A549 (cell line): ENCODE measurements at regions of chr17 and their contacts with region 1.

Region 1: GRCh38 chr17:19362277-19363113 is at the start of gene B9D1:
- DNase-seq: peak; percentile 97 to 99
- ATAC-seq: peak; percentile 79 to 93
- H3K4me3 ChIP-seq: peak within 1 kb of the TSS; percentile 82
- H3K27ac ChIP-seq: peak within 1 kb of the TSS; percentile 94 to 96
- H3K4me1 ChIP-seq: peaks cover 16% of the 10 kb centered on the region; the same call in 2 of the 3 replicates
- CTCF ChIP-seq: peak; percentile 100
- EP300 ChIP-seq: no peak
- POLR2A ChIP-seq: peak; percentile 47
- RAD21 ChIP-seq: peak; percentile 100
- polyA plus RNA-seq, gene B9D1: 60.6 and 65.6 TPM in 2 replicates

Region 2: DNA sequence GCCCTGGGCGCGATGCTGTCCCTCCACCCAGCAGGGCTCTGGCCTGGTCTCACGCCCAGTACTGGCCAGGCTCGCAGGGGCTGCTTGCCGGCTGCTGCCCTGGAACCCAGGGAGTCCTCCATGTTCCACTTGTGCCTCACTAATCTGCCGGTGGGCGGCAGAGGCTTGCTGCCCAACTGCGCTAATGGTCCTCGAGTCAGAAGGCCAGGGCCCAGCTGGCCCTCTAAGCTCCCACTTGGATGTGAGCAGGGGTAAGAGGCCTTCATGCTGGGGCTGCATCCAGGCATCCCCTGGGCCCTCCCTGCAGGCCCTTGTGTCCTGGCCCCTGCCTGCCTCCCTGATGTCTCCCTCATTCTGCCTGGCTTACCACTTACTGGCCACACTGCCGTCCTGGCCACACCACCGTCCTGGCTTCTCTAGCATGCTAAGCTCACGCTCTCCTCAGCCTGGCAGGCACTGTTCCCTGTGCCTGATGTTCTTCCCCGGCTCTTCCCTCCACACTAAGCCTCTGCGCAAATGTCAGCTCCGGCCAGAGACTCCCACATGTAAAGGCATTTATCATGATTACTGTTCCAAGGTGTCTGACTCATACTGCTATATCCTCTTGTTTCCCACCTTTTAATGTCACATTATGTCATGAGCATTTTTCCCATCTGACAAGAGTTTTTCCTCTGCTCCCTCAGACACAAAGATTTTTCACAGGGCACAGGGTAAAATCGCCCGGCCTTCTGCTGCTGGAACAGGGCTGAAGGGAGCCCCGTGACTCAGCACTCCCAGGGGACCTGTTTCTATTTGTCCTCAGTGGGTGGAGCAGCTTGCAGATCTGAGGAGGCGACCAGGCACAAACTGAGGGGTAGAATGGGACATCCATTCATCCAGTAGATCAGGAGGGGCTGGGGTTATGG is 15.9 kb before region 1 on chr17:
- CTCF ChIA-PET with region 1: interaction called, 28 read pairs
- POLR2A ChIA-PET with region 1: interaction called, 3 read pairs
- DNase-seq: peak; percentile 84 to 94
- ATAC-seq: peak; percentile 73 to 84
- H3K4me3 ChIP-seq: no peak overlapping the region
- H3K27ac ChIP-seq: peak overlapping the region; percentile 86 to 93
- H3K4me1 ChIP-seq: peaks cover 35% of the 10 kb centered on the region
- CTCF ChIP-seq: no peak
- EP300 ChIP-seq: no peak
- POLR2A ChIP-seq: peak; percentile 3; the same call in 1 of the 2 replicates
- RAD21 ChIP-seq: 0 out of 5 replicates have a peak, but pooled peaks of 1 of the 2 experiments have one; percentile 5

Region 3: GRCh38 chr17:19410875-19411620 is 48.6 kb after region 1 on chr17 and contains the start of gene RNF112:
- CTCF ChIA-PET with region 1: interaction called, 35 read pairs
- POLR2A ChIA-PET with region 1: interaction called, 3 read pairs
- DNase-seq: no peak
- ATAC-seq: peak in 1 of 2 experiments; percentile 23; a peak in 1 of 6 replicates
- H3K4me3 ChIP-seq: no peak within 1 kb of the TSS
- H3K27ac ChIP-seq: peak within 1 kb of the TSS in 1 of 2 experiments; percentile 34; a peak in 1 of 6 replicates
- H3K4me1 ChIP-seq: no peaks in the 10 kb centered on the region
- CTCF ChIP-seq: no peak
- EP300 ChIP-seq: no peak
- POLR2A ChIP-seq: no peak
- RAD21 ChIP-seq: no peak
- polyA plus RNA-seq, gene RNF112: 0.27 and 0.65 TPM in 2 replicates

Region 4: DNA sequence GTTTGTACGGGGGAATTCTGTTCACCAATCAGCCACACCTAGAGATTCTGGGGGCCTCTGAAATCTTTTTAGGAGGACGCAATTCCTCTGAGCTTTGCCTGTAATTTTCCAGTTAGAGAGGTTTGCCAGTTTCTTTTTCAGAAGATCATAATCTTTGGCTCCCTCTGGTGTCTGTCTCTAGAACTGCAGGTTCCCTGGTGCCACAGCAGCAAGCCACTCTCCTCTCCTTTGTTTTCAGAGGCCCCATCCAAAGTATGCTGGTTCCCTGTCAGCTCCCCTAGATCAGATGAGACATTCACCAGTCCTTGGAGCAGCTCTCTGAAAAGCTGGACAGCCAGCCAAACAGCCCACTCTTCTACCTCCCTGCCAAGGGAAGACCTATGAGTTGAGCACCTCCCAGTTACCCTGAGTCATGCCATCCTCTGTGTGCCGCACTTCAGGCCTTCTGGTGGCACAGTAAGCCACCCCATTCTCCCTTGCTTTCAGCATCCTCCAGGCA is 84.6 kb after region 1 on chr17:
- CTCF ChIA-PET with region 1: interaction called, 362 read pairs
- POLR2A ChIA-PET with region 1: interaction called, 11 read pairs
- DNase-seq: peak; percentile 75 to 80
- ATAC-seq: peak; percentile 74 to 82
- H3K4me3 ChIP-seq: no peak overlapping the region
- H3K27ac ChIP-seq: peak overlapping the region; percentile 56 to 82
- H3K4me1 ChIP-seq: peaks cover 29% of the 10 kb centered on the region
- CTCF ChIP-seq: peak; percentile 97
- EP300 ChIP-seq: no peak
- POLR2A ChIP-seq: no peak
- RAD21 ChIP-seq: peak; percentile 95 to 96

Region 5: GRCh38 chr17:19513897-19514488 is 151.5 kb after region 1 on chr17:
- CTCF ChIA-PET with region 1: interaction called, 24 read pairs
- POLR2A ChIA-PET with region 1: no interaction called
- DNase-seq: peak; percentile 72 to 82
- ATAC-seq: peak; percentile 91 to 92
- H3K4me3 ChIP-seq: no peak overlapping the region
- H3K27ac ChIP-seq: peak overlapping the region; percentile 19 to 33; a peak in 2 of 6 replicates
- H3K4me1 ChIP-seq: peaks cover 4% of the 10 kb centered on the region; the same call in 1 of the 3 replicates
- CTCF ChIP-seq: peak; percentile 99
- EP300 ChIP-seq: no peak
- POLR2A ChIP-seq: no peak
- RAD21 ChIP-seq: peak; percentile 99 to 100

Region 6: GRCh38 chr17:19766422-19767270 is 404.2 kb after region 1 on chr17:
- CTCF ChIA-PET with region 1: interaction called, 152 read pairs
- POLR2A ChIA-PET with region 1: interaction called, 10 read pairs
- DNase-seq: peak; percentile 77 to 86
- ATAC-seq: peak; percentile 83 to 93
- H3K4me3 ChIP-seq: no peak overlapping the region
- H3K27ac ChIP-seq: peak overlapping the region; percentile 9 to 51; a peak in 3 of 6 replicates
- H3K4me1 ChIP-seq: peaks cover 10% of the 10 kb centered on the region
- CTCF ChIP-seq: peak; percentile 99
- EP300 ChIP-seq: no peak
- POLR2A ChIP-seq: no peak
- RAD21 ChIP-seq: peak; percentile 100